OCI-LY7 (cell line): ENCODE measurements at regions of chr5 and their contacts with region 1.

Region 1: GRCh38 chr5:149518620-149519019 is 32.6 kb downstream of the CSNK1A1 start:
- DNase-seq: no peak
- H3K4me3 ChIP-seq: no peak overlapping the region
- H3K27ac ChIP-seq: no peak overlapping the region
- H3K4me1 ChIP-seq: no peaks in the 10 kb centered on the region
- CTCF ChIP-seq: no peak

Region 2: DNA sequence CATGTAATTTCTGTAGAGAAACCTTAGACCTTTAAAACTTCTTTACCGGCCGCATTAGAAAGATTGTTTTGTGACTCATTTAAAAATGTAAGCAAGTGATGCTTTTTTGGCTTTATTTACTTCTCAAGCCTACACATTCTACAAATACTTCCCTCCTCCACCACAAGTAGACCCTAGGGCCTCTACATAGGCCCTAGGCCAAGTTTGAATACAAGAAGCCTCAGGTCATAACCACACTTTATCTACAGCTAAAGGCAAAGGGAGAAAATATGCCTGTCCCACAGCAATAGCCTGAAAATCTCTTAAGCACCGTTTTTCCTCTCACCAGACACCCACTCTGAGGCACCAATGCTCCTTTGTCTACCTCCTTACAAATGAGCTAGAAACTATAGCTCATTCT is 21.3 kb before region 1 on chr5:
- CTCF ChIA-PET with region 1: interaction called, 7 read pairs
- POLR2A ChIA-PET with region 1: interaction called, 11 read pairs
- intact Hi-C with region 1: no loop called
- DNase-seq: no peak
- H3K4me3 ChIP-seq: no peak overlapping the region
- H3K27ac ChIP-seq: no peak overlapping the region
- H3K4me1 ChIP-seq: no peaks in the 10 kb centered on the region
- CTCF ChIP-seq: no peak

Region 3: DNA sequence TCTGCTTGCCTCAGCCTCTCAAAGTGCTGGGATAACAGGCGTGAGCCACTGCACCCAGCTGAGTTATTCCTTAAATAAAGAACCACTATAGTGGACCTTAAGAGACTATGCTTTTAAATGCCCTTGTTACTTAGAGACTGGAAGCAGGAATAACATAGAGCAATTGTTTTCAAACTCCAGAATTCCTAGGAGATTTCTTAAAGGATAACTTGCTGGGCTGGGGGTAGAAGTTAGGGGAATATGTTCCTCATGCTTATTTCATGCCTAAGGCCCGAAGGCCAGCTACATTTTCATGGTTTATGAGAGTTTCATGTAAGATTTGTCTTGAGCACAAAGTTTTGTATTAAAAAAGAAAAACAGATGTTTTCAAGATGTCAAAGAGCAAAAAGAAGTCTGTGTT is 15.6 kb before region 1 on chr5:
- CTCF ChIA-PET with region 1: interaction called, 7 read pairs
- POLR2A ChIA-PET with region 1: interaction called, 11 read pairs
- intact Hi-C with region 1: no loop called
- DNase-seq: no peak
- H3K4me3 ChIP-seq: no peak overlapping the region
- H3K27ac ChIP-seq: no peak overlapping the region
- H3K4me1 ChIP-seq: no peaks in the 10 kb centered on the region
- CTCF ChIP-seq: no peak

Region 4: GRCh38 chr5:149544028-149544420 is 25.4 kb after region 1 on chr5:
- CTCF ChIA-PET with region 1: no interaction called
- POLR2A ChIA-PET with region 1: interaction called, 17 read pairs
- intact Hi-C with region 1: no loop called
- DNase-seq: no peak
- H3K4me3 ChIP-seq: no peak overlapping the region
- H3K27ac ChIP-seq: no peak overlapping the region
- H3K4me1 ChIP-seq: peaks cover 21% of the 10 kb centered on the region
- CTCF ChIP-seq: no peak